Aorta (tissue), 5 donors: ENCODE measurements at regions of chr5 and their contacts with region 1.

Region 1: DNA sequence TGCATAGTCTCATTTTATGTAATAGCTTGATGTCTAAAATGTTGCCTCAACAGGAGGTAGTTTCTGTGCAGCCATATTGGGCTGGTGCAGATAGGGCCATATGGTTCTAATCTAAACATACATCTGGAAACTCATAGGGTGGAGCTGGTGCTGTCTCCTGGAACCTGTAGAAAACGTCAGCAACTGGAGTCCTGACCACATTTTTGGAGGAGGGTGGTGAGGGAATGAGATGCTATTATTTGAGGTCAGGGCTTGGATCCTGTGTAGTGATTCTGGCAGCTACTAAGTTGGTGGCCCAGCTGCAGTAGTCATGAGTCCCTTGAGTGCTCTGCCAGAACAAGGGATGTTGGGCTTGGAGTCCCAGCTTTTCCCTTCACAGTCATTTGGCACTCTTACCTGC is 14.1 kb downstream of the MAN2A1 start:
- DNase-seq: no peak
- ATAC-seq: no peak
- H3K4me3 ChIP-seq: no peak overlapping the region
- H3K27ac ChIP-seq: peak overlapping the region; percentile 49 to 57
- H3K4me1 ChIP-seq: peaks cover 6 to 24% of the 10 kb centered on the region in 2 donors
- H3K27me3 ChIP-seq: no peaks in the 10 kb centered on the region

Region 2: GRCh38 chr5:109028608-109029299 is 675.1 kb before region 1 on chr5:
- intact Hi-C with region 1: no loop called
- DNase-seq: no peak
- ATAC-seq: no peak
- H3K4me3 ChIP-seq: no peak overlapping the region
- H3K27ac ChIP-seq: no peak overlapping the region
- H3K4me1 ChIP-seq: no peaks in the 10 kb centered on the region
- H3K27me3 ChIP-seq: no peaks in the 10 kb centered on the region

Region 3: GRCh38 chr5:109739741-109740728 is 36.2 kb after region 1 on chr5:
- intact Hi-C with region 1: loop called (anchors 5 to 10 kb)
- DNase-seq: no peak
- ATAC-seq: peak; percentile 60
- H3K4me3 ChIP-seq: no peak overlapping the region
- H3K27ac ChIP-seq: peak overlapping the region in 1 of 2 donors; percentile 29
- H3K4me1 ChIP-seq: peaks cover 5 to 6% of the 10 kb centered on the region in 2 donors
- H3K27me3 ChIP-seq: no peaks in the 10 kb centered on the region

Region 4: DNA sequence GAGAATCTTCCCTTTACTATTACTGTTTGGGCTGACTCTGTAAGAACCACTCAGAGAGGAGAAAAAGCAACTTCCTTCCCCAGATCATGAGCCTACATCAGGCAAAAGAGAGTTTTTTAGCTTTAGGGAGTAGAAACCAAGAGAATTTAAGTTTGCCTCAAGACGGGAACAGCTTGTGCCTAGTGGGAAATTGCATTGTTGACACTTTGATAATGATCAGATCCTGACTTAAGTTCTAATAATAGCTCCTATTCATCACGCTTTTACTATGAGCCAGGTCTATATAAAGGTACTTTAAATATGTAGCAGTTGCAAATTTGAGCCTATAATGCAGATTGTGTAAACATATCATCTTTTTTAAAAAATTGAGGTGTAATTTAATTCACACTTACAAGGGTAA is 284.1 kb after region 1 on chr5:
- intact Hi-C with region 1: loop called in 1 of 2 experiments (anchors 10 kb)
- DNase-seq: no peak
- ATAC-seq: peak; percentile 76
- H3K4me3 ChIP-seq: peak overlapping the region in 1 of 2 donors; percentile 41
- H3K27ac ChIP-seq: peak overlapping the region in 1 of 2 donors; percentile 98
- H3K4me1 ChIP-seq: peaks cover 2 to 13% of the 10 kb centered on the region in 2 donors
- H3K27me3 ChIP-seq: no peaks in the 10 kb centered on the region